ENCODE measurements at regions of chr16 and their contacts with region 1.

Region 1: GRCh38 chr16:30805370-30806169 is 18.6 kb upstream of the ZNF629 start:
- DNase-seq: peak; percentile 56
- ATAC-seq: peak; percentile 92
- H3K4me3 ChIP-seq: peak overlapping the region; percentile 72 to 87
- H3K27ac ChIP-seq: peak overlapping the region; percentile 93
- H3K4me1 ChIP-seq: peaks cover 8 to 16% of the 10 kb centered on the region in 2 experiments; a peak in 3 of 4 replicates
- H3K27me3 ChIP-seq: no peaks in the 10 kb centered on the region
- CTCF ChIP-seq: no peak
- POLR2A ChIP-seq: peak; percentile 91
- RAD21 ChIP-seq: no peak; the same call in 1 of the 2 replicates

Region 2: DNA sequence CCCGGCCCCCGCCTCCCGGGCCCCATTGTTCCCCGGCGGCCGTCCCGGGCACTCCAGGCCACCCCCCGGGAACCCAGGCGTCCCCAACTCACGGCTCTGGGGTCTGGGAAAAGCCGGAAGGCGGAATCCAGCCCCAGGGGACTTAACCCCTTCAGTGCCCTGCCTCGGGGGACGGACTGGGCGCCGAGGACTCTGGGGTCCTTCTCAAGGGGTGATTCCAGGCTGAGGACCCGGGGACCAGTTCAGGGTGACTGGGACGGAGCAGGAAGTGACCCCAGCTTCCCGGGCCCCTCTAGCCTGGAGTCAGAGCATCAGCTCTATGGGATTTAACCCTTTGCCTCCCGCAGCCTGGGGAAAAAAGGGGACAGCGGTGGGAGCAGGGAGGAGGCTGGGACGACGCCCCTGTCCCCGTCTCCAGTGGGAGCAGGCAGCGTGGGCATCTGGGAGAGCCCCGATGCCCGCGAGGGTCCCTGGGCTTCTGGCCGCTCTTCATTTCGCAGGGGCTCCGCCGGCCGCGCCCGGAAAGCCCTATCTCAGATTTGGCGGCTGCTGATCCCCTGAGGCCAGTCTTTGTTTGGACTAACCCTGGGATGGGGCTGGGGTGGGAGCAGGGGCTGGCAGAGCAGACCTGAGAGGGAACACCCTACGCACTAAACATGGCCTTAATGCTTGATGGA is 18.5 kb before region 1 on chr16 and contains the start of gene ZNF629:
- CTCF ChIA-PET with region 1: interaction called, 11 read pairs
- POLR2A ChIA-PET with region 1: interaction called, 23 read pairs
- RAD21 ChIA-PET with region 1: interaction called in 1 of 2 experiments, 4 read pairs
- intact Hi-C with region 1: loop called (anchors 1 kb)
- DNase-seq: peak; percentile 39
- ATAC-seq: peak; percentile 84
- H3K4me3 ChIP-seq: peak within 1 kb of the TSS; percentile 92 to 94
- H3K27ac ChIP-seq: peak within 1 kb of the TSS; percentile 78
- H3K4me1 ChIP-seq: peaks cover 7 to 22% of the 10 kb centered on the region in 2 experiments; a peak in 3 of 4 replicates
- H3K27me3 ChIP-seq: no peaks in the 10 kb centered on the region
- CTCF ChIP-seq: no peak
- POLR2A ChIP-seq: no peak
- RAD21 ChIP-seq: no peak
- total RNA-seq, gene ZNF629: 18.4 TPM

Measured in HCT116 (cell line).